Mammary epithelial cell (primary cell): ENCODE measurements at regions of chr18 and their contacts with region 1.

Region 1: DNA sequence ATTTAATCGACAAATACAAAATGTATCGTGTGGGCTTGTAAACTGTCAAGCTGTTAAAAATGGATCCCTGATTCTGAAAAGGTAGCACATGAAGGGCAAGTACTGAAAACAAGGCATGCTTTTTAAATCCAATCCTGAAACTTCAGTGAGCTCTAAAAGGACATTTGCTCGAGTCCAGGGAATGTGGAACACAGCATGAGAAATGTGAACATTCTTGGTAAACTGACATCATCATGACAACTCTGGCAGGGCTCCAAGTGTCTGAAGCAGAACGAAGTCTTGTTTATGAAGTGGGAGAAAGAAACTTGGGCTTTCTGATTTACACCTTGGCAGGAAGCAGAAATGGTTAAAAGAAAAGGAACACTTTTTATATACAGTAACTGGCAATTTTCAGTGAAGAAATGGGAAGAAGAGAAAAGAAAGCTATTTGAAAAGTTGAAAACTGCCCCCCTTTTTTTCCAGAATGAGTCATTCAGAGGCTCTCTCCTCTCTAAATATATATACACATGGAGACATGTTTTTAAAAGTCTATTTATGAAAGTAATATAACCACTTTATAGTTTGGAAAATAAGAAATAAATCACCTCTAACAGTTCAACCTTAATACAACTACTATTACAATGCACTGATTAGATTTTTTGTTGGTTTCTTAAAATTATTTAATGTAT is 120.8 kb downstream of the GAREM1 start:
- DNase-seq: peak; percentile 90
- H3K4me3 ChIP-seq: peak overlapping the region in 2 of 3 experiments; percentile 17 to 53
- H3K27ac ChIP-seq: peak overlapping the region; percentile 71
- H3K4me1 ChIP-seq: peaks cover 9% of the 10 kb centered on the region
- H3K27me3 ChIP-seq: no peaks in the 10 kb centered on the region
- CTCF ChIP-seq: no peak

Region 2: DNA sequence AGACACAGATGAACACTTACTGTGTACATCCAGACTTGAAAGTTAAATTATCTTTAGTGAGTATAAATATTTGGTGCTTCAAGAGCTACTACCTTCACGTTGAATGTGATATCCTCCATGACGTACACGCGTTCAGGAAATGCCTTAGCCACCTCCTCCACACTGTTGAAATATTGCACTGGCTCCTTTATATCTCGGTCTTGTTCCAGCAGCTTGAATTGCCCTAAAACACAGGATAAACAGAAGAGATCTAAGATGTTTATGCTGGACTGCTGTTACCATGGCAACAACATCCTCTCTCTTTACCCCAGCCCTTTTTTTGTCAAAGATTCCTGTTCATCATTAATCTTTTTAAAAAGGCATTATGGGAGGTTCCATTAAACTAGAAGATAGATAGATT is 39.8 kb before region 1 on chr18:
- CTCF ChIA-PET with region 1: no interaction called
- dilution Hi-C with region 1: loop called (anchors 5 kb)
- in situ Hi-C with region 1: no loop called
- intact Hi-C with region 1: no loop called
- DNase-seq: no peak
- H3K4me3 ChIP-seq: no peak overlapping the region
- H3K27ac ChIP-seq: no peak overlapping the region
- H3K4me1 ChIP-seq: peaks cover 9% of the 10 kb centered on the region
- H3K27me3 ChIP-seq: no peaks in the 10 kb centered on the region
- CTCF ChIP-seq: no peak

Region 3: DNA sequence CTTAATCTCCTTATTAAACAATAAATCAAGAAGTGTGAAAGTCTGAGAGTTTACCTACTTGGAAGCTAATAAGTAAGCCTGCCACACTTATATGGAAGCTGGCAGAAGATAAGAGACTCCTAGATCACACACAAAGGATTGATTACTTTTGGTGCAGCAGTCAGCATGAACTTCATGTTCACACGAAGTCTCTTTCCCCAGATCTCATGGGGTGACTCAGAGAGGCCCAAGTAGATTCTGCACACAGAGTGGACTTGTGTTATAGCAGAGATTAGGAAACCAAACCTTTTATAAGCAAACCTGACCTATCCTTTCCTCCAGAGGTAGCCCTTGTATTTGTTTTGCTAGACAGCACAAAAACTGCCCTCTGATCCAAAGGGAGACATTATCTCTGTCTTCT is 130.7 kb after region 1 on chr18:
- CTCF ChIA-PET with region 1: no interaction called
- dilution Hi-C with region 1: no loop called
- in situ Hi-C with region 1: no loop called
- intact Hi-C with region 1: no loop called
- DNase-seq: peak; percentile 12
- H3K4me3 ChIP-seq: no peak overlapping the region
- H3K27ac ChIP-seq: no peak overlapping the region
- H3K4me1 ChIP-seq: no peaks in the 10 kb centered on the region
- H3K27me3 ChIP-seq: no peaks in the 10 kb centered on the region
- CTCF ChIP-seq: no peak